ENCODE measurements at regions of chr12 and their contacts with region 1.

Region 1: GRCh38 chr12:32918890-32919801 is 22.6 kb upstream of the PKP2 start:
- DNase-seq: no peak
- H3K4me3 ChIP-seq: no peak overlapping the region
- H3K27ac ChIP-seq: no peak overlapping the region
- H3K4me1 ChIP-seq: no peaks in the 10 kb centered on the region
- H3K27me3 ChIP-seq: no peaks in the 10 kb centered on the region
- CTCF ChIP-seq: peak in 1 of 3 experiments; percentile 39

Region 2: DNA sequence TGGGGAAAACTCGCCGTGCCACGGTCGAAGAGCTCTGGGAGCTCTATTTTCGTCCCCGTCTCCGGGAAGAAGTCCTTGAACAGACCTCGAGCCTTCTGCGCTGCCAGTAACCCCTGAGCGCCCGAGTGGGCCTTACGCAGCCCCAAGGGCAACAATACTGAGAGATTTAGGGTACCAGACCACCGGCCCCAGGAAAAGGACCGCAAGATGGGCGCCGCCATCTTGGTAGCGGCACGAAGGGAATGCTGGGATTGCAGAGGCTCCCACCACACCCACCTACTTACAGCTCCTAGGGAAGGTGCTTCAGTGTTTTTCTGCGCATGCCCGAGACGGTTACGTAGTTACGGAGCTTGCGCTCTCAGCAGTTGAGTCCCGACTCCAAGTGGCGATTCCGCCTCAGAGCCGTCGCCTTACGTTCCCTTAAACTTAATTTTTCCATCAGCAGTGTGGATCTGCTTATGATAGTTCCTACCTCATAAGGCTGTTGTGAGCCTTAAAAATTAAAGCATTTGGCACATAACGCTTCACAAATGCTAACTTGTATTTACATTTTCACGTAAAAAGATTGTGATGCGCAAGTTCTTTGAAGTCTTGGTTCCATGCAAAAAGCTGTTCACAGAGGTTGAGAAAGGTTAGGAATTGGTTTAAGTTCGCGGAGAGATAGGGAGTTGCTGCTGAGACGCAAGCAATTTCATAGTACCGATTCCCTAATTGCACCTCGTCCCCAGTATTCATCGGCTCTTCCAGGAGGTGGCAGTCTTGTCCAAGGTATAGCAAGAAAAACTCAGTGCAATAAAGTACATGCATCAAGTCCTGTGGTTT is 163.3 kb before region 1 on chr12 and contains the start of gene YARS2:
- intact Hi-C with region 1: loop called (anchors 10 kb)
- DNase-seq: peak; percentile 75 to 97
- H3K4me3 ChIP-seq: peak within 1 kb of the TSS; percentile 95 to 99
- H3K27ac ChIP-seq: peak within 1 kb of the TSS; percentile 91 to 93
- H3K4me1 ChIP-seq: peaks cover 0 to 11% of the 10 kb centered on the region in 2 donors
- H3K27me3 ChIP-seq: no peaks in the 10 kb centered on the region
- CTCF ChIP-seq: peak; percentile 78 to 82 (median 80)
- total RNA-seq, gene YARS2: 15.8 TPM

Region 3: DNA sequence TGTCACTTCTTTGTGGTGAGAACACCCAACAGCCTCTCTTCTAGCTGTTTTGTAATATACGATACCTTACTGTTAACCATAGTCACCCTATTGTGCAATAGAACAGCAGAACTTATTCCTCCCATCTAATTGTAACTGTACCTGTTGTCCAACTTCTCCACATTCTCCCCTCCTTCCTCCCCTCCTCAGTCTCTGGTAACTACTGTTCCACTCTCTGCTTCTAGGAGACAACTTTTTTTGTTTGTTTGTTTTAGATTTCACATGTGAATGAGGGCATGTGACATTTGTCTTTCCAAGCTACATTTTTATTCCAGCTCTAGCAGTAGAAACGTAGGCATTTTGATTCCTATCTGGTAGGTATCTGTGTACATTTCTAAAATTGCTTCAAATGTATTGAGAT is 174.5 kb after region 1 on chr12:
- intact Hi-C with region 1: no loop called
- DNase-seq: no peak
- H3K4me3 ChIP-seq: no peak overlapping the region
- H3K27ac ChIP-seq: no peak overlapping the region
- H3K4me1 ChIP-seq: no peaks in the 10 kb centered on the region
- H3K27me3 ChIP-seq: no peaks in the 10 kb centered on the region
- CTCF ChIP-seq: no peak

Measured in ascending aorta (tissue), 2 donors.